Activated T-helper 1 cell treated with anti-CD3 and anti-CD28 coated beads, Interleukin-12 subunit alpha, Interleukin-12 subunit beta, Interleukin-2, Interleukin-4 antibody, amounts not matched to agents 30 ng/mL and 10 ng/mL and 1 ng/mL, durations not matched to agents 14 hours and 24 hours and 36 hours (primary cell): ENCODE measurements at regions of chr18 and their contacts with region 1.

Region 1: GRCh38 chr18:2641638-2642037 is 13.9 kb upstream of the SMCHD1 start:
- DNase-seq: no peak
- H3K4me3 Mint-ChIP-seq: peak overlapping the region; percentile 73
- H3K27ac Mint-ChIP-seq: peak overlapping the region; percentile 94
- H3K4me1 Mint-ChIP-seq: peaks cover 53% of the 10 kb centered on the region
- H3K27me3 Mint-ChIP-seq: peaks cover 2% of the 10 kb centered on the region

Region 2: DNA sequence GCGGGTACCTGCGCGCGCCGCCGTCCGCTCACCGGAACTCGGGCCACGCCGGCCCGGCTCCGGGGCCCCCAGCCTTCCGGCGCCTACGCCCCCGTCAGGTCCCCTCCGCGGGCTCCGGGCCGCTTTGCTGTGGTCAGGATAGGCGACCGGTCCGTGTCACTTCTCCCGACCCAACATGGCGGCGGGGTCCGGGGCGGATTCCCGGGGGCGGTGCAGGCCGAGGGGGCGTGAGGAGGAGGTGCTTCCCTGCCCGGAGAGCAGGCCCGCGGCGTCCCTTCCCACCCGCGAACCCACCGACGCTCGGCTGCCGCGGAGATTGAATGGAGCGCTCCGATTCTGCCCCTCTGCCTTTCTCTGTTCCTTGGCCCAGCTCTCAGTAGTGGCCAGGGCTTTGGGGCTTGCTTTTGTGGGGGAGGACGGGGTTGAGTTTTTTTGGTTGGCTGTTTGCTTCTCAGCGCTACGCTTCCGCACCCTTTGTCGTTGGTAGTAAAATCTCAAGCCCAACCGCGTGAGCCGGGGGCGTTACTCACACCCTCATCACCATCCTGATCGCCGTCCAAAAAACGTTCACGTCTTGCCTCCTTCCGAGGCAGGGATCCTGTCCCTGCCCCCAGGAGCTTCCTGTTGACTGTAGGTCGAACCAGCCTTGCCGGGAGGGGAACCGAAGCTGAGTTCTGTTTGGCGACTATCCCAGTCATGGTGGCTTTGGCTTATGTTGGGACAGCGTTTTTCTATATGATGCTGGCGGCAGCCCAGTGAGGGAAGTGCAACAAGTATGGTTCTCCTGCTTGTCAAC is 1829.1 kb before region 1 on chr18:
- intact Hi-C with region 1: loop called (anchors 5 kb)
- DNase-seq: peak; percentile 81
- H3K4me3 Mint-ChIP-seq: peak overlapping the region; percentile 90
- H3K27ac Mint-ChIP-seq: peak overlapping the region; percentile 99
- H3K4me1 Mint-ChIP-seq: peaks cover 64% of the 10 kb centered on the region
- H3K27me3 Mint-ChIP-seq: no peaks in the 10 kb centered on the region

Region 3: GRCh38 chr18:2589345-2590068 is 52.1 kb before region 1 on chr18:
- intact Hi-C with region 1: loop called (anchors 1 kb)
- DNase-seq: no peak
- H3K4me3 Mint-ChIP-seq: peak overlapping the region; percentile 63
- H3K27ac Mint-ChIP-seq: peak overlapping the region; percentile 77
- H3K4me1 Mint-ChIP-seq: peaks cover 58% of the 10 kb centered on the region
- H3K27me3 Mint-ChIP-seq: no peaks in the 10 kb centered on the region

Region 4: GRCh38 chr18:2655178-2655953 is 13.7 kb after region 1 on chr18 and contains the start of gene SMCHD1:
- intact Hi-C with region 1: loop called (anchors 1 kb)
- DNase-seq: peak; percentile 86
- H3K4me3 Mint-ChIP-seq: peak within 1 kb of the TSS; percentile 88
- H3K27ac Mint-ChIP-seq: peak within 1 kb of the TSS; percentile 96
- H3K4me1 Mint-ChIP-seq: peaks cover 36% of the 10 kb centered on the region
- H3K27me3 Mint-ChIP-seq: peaks cover 2% of the 10 kb centered on the region
- total RNA-seq, gene SMCHD1: 98.6 and 112 TPM in 2 replicates

Region 5: DNA sequence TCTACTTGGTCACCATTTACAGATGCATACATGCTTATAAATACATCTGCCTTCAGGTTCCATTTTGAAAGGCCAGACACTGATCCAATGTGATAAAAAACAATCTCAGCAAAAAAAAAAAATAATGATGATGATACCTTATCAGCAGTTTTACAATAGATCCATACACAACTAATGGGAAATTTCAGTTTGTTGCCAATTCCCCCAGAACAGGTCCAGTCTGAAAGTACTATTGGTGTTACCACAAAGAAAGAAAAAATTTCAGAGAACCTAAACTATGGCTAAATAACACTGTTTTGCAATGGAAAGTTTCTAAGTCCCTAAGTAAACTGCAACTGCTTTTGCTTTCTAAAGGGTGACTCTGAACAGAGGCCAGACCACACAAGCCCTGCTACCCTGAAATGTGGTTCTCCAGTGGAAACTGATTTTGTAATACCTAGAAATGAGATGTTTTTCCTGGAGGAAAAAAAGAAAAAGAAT is 317.2 kb after region 1 on chr18:
- intact Hi-C with region 1: loop called (anchors 1 kb)
- DNase-seq: peak; percentile 46
- H3K4me3 Mint-ChIP-seq: peak overlapping the region; percentile 81
- H3K27ac Mint-ChIP-seq: peak overlapping the region; percentile 99
- H3K4me1 Mint-ChIP-seq: peaks cover 93% of the 10 kb centered on the region
- H3K27me3 Mint-ChIP-seq: no peaks in the 10 kb centered on the region

Region 6: DNA sequence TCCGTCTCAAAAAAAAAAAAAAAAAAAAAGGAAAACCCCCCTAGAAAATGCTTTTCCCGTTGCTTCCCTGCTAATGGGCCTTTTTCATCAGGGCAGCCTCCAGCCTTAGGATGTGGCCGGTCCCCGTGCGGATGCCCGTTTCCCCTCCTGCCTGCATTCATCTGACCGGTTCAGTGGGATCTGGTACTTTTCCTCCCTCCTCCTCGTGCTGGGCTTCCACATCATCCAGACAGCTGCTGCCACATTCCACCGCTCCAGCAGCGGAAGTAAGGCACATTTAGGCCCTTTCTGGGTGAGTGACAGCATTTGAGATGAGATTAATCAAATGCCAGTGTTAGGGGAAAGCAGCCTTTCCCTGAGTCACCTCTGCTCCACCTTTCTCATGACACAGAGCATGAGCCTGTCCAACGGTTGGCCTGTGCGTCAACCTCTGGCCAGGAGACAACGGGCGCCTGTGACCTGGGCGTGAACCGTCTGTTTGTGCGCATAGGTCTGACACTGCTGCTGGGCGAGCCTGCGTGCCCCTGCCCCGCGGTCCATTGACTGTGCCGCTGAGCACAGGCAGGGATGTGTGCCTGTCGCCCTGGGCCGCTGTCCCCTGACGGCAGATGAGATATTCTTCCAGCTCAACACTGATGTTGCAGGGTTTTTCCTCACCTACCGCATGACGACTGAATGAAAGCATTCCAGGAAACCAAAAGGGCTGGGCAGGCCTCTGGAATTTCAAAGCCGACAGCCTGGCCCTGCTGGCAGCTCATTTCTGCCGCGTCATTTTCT is 982.3 kb after region 1 on chr18:
- intact Hi-C with region 1: loop called (anchors 10 kb)
- DNase-seq: no peak
- H3K4me3 Mint-ChIP-seq: peak overlapping the region; percentile 47
- H3K27ac Mint-ChIP-seq: peak overlapping the region; percentile 90
- H3K4me1 Mint-ChIP-seq: peaks cover 42% of the 10 kb centered on the region
- H3K27me3 Mint-ChIP-seq: peaks cover 2% of the 10 kb centered on the region